ENCODE measurements at regions of chr9 and their contacts with region 1.

Region 1: DNA sequence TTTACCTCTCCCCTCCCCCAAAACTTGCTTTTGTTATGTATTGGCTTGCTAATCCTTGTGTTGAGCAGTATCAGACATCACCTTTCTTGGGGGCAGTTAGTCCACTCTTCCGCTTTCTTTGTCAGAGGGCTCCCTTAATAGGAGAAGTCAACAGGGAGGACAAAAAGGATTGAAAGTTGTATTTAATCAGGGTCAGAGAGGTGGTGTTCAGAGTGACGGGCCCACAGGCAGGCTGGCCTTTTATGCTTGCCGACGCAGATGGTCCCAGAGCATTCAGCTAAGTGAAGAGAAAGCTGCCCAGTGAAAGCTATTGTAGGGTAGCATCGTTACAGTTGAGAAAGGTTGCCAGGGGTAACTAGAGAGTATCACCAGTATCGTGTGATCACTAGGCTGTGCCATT is 131.1 kb downstream of the ZCCHC7 start:
- DNase-seq: no peak
- ATAC-seq: no peak
- H3K4me3 ChIP-seq: no peak overlapping the region
- H3K27ac ChIP-seq: no peak overlapping the region
- H3K4me1 ChIP-seq: peaks cover 0 to 8% (median 0%) of the 10 kb centered on the region in 9 donors
- H3K27me3 ChIP-seq: no peaks in the 10 kb centered on the region
- CTCF ChIP-seq: no peak

Region 2: DNA sequence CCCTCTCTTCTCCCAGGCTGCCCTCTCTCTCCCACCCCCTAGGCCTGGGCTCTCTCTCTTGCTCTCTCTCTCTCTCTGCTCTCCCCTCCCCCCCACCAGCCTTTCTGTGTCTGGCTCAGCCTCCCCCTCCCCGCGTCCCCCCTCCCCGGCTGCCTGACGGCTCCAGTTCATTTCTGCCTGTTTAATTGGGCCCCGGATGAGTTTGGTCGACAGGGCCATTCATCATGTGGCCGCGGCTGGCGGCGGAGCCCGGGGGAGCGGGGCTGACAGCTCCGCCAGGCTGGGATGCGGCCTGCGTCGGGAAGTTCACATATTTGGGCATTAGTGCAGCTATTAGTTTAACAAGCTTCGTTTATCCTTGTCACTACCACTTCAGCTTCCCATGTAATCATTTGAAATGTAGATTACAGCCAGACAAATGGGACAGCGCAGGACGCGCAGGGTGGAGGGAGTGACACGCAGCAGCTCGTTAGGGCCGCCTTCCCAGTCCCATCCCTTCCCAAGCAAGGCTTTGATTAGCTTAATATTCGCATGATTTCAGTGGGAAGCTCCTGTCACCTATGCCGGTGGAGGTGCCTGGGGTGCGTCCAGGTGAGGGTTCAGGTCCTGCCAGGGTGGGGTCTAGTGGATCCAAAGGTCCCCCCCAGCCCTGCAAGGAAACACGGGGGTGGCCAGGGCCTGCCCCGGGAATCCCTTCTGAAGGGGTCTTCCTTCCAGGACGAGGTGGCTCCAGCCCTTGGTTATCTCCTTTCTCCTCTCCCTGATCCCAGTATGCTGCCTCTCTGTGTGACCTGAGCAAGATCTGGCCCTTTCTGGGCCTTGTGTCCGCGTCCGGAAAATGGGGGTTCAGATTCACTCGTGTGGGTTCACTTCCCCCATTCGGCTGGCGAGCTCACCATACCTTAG is 432.2 kb before region 1 on chr9:
- intact Hi-C with region 1: no loop called
- DNase-seq: no peak
- ATAC-seq: peak in 7 of 8 donors; percentile 22 to 52 (median 35)
- H3K4me3 ChIP-seq: peak overlapping the region in 6 of 10 donors; percentile 27 to 46 (median 36)
- H3K27ac ChIP-seq: no peak overlapping the region
- H3K4me1 ChIP-seq: peaks cover 0 to 15% (median 6%) of the 10 kb centered on the region in 9 donors
- H3K27me3 ChIP-seq: peaks cover 5 to 68% (median 55%) of the 10 kb centered on the region in 7 donors
- CTCF ChIP-seq: no peak

Region 3: DNA sequence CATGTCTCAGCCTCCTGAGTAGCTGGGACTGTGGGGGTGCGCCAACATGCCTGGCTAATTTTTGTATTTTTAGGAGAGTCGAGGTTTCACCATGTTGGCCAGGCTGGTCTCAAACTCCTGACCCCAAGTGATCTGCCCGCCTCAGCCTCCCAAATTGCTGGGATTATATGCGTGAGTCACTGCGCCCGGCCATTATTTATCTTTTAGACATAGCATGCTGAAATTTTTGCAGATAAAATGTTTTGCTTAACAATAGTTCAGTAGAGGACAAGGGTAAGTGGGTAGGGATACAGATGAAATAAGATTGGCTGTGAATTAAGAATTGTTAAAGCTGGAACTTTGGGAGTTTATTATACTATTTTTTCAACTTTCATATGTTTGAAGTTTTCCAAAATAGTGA is 20.2 kb after region 1 on chr9:
- intact Hi-C with region 1: loop called in 1 of 10 experiments (anchors 2 kb)
- DNase-seq: no peak
- ATAC-seq: no peak
- H3K4me3 ChIP-seq: no peak overlapping the region
- H3K27ac ChIP-seq: no peak overlapping the region
- H3K4me1 ChIP-seq: no peaks in the 10 kb centered on the region
- H3K27me3 ChIP-seq: no peaks in the 10 kb centered on the region
- CTCF ChIP-seq: no peak

Region 4: DNA sequence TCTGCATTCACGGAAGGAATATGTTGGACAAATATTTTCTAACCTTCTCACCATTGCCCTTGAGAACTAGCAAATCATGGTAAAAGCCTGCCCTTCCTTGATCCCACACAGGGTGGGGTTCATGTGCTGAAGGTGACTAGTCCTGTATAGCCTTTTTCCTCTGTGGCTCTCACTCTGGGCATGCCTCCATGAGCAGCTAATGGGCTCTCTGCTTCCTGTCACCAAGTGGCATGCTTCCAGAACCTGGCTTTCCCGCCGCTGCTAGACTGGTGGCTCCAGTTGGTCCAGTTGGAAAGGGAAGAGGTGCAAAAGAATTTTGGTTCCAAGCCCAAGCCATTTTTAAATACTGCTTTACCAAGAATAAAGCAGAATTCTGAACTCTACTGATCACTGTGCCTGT is 289.2 kb after region 1 on chr9:
- intact Hi-C with region 1: no loop called
- DNase-seq: peak; percentile 47 to 63
- ATAC-seq: peak; percentile 51 to 93 (median 82)
- H3K4me3 ChIP-seq: no peak overlapping the region
- H3K27ac ChIP-seq: peak overlapping the region in 1 of 10 donors; percentile 31
- H3K4me1 ChIP-seq: peaks cover 0 to 11% (median 0%) of the 10 kb centered on the region in 9 donors
- H3K27me3 ChIP-seq: no peaks in the 10 kb centered on the region
- CTCF ChIP-seq: peak in 1 of 9 donors; percentile 15

Measured in heart right ventricle (tissue), 16 donors.